ENCODE measurements at regions of chr1 and their contacts with region 1.

Region 1: DNA sequence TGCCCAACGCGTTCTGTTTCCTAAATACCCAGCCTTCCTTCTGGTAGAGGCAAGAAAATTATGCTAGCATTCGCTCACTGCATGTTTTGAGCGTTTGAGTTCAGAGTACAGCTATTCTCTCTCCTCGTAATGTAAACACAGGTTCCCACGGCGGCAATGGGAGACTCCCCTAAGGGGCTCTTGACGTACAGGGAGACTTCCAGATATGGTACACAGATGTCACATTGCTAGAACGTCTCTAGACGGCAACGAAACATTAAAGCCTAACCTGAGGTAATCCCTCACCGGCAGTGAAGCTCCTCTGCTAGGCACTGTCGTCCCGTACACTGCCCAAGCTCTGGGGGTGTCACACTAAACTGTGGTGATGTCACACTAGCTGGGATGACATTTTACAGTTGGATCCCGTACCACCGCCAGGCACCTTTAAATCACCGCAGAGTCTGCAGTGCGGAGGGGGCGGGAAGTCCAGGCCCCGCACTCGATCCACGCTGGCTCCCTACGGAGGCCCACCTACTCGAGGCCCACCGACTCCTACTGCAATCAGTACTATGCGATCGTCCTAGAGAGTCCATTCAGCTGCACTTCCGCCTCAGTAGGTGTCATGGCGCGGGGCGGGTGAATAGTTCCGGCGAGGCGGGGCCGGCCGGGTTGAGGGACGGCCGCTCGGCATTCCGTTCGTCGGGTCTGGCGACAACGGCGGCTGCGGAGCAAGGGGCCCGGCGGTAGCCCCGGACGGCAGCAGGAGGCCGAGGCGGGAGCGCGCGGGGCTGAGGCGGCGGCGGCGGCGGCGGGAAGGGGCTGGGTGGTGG is at the start of gene HIPK1:
- DNase-seq: peak; percentile 88 to 97 (median 93)
- ATAC-seq: peak; percentile 69
- H3K4me3 ChIP-seq: peak within 1 kb of the TSS; percentile 100
- H3K4me3 Mint-ChIP-seq: peak within 1 kb of the TSS; percentile 96 to 100 (median 99)
- H3K27ac ChIP-seq: peak within 1 kb of the TSS; percentile 99
- H3K27ac Mint-ChIP-seq: peak within 1 kb of the TSS; percentile 93 to 100 (median 100)
- H3K4me1 ChIP-seq: peaks cover 41 to 46% of the 10 kb centered on the region in 2 donors
- H3K4me1 Mint-ChIP-seq: peaks cover 41 to 56% (median 48%) of the 10 kb centered on the region in 7 donors
- H3K27me3 ChIP-seq: no peaks in the 10 kb centered on the region
- H3K27me3 Mint-ChIP-seq: peaks cover 0 to 12% (median 0%) of the 10 kb centered on the region in 5 donors
- total RNA-seq, gene HIPK1: 95.8 to 211 (median 124) TPM

Region 2: GRCh38 chr1:112619520-112620376 is 1309.4 kb before region 1 on chr1 and contains the start of gene CAPZA1:
- CTCF ChIA-PET with region 1: no interaction called
- POLR2A ChIA-PET with region 1: interaction called, 6 read pairs
- intact Hi-C with region 1: loop called (anchors 1 to 2 kb)
- DNase-seq: peak; percentile 83 to 93 (median 91)
- ATAC-seq: peak; percentile 89
- H3K4me3 ChIP-seq: peak within 1 kb of the TSS; percentile 93
- H3K4me3 Mint-ChIP-seq: peak within 1 kb of the TSS; percentile 98 to 100 (median 99)
- H3K27ac ChIP-seq: peak within 1 kb of the TSS; percentile 100
- H3K27ac Mint-ChIP-seq: peak within 1 kb of the TSS; percentile 99 to 100 (median 100)
- H3K4me1 ChIP-seq: peaks cover 19 to 21% of the 10 kb centered on the region in 2 donors
- H3K4me1 Mint-ChIP-seq: peaks cover 27 to 55% (median 46%) of the 10 kb centered on the region in 7 donors
- H3K27me3 ChIP-seq: no peaks in the 10 kb centered on the region
- H3K27me3 Mint-ChIP-seq: peaks cover 0 to 1% (median 0%) of the 10 kb centered on the region in 5 donors
- total RNA-seq, gene CAPZA1: 114 to 237 (median 143) TPM

Region 3: GRCh38 chr1:113811888-113812660 is 117.1 kb before region 1 on chr1 and contains the start of gene RSBN1:
- CTCF ChIA-PET with region 1: interaction called, 3 read pairs
- POLR2A ChIA-PET with region 1: interaction called, 8 read pairs
- intact Hi-C with region 1: loop called (anchors 1 kb)
- DNase-seq: peak; percentile 92 to 99 (median 98)
- ATAC-seq: peak; percentile 95
- H3K4me3 ChIP-seq: peak within 1 kb of the TSS; percentile 88
- H3K4me3 Mint-ChIP-seq: peak within 1 kb of the TSS; percentile 91 to 99 (median 97)
- H3K27ac ChIP-seq: peak within 1 kb of the TSS; percentile 97
- H3K27ac Mint-ChIP-seq: peak within 1 kb of the TSS; percentile 96 to 99 (median 98)
- H3K4me1 ChIP-seq: peaks cover 17 to 25% of the 10 kb centered on the region in 2 donors
- H3K4me1 Mint-ChIP-seq: peaks cover 20 to 51% (median 38%) of the 10 kb centered on the region in 7 donors
- H3K27me3 ChIP-seq: no peaks in the 10 kb centered on the region
- H3K27me3 Mint-ChIP-seq: no peaks in the 10 kb centered on the region
- total RNA-seq, gene RSBN1: 29.9 to 58.1 (median 42.0) TPM

Region 4: GRCh38 chr1:113904674-113905434 is 24.3 kb before region 1 on chr1 and contains the starts of genes AP4B1 and DCLRE1B:
- CTCF ChIA-PET with region 1: interaction called, 39 read pairs
- POLR2A ChIA-PET with region 1: interaction called, 201 read pairs
- intact Hi-C with region 1: loop called (anchors 1 kb)
- DNase-seq: peak; percentile 88 to 98 (median 97)
- ATAC-seq: peak; percentile 96
- H3K4me3 ChIP-seq: peak within 1 kb of the TSS; percentile 82
- H3K4me3 Mint-ChIP-seq: peak within 1 kb of the TSS; percentile 92 to 100 (median 99)
- H3K27ac ChIP-seq: peak within 1 kb of the TSS; percentile 89
- H3K27ac Mint-ChIP-seq: peak within 1 kb of the TSS; percentile 96 to 100 (median 99)
- H3K4me1 ChIP-seq: peaks cover 15 to 21% of the 10 kb centered on the region in 2 donors
- H3K4me1 Mint-ChIP-seq: peaks cover 36 to 62% (median 54%) of the 10 kb centered on the region in 7 donors
- H3K27me3 ChIP-seq: no peaks in the 10 kb centered on the region
- H3K27me3 Mint-ChIP-seq: peaks cover 0 to 4% (median 0%) of the 10 kb centered on the region in 5 donors
- total RNA-seq, gene AP4B1: 50.8 to 75.4 (median 65.0) TPM
- total RNA-seq, gene DCLRE1B: 4.1 to 13.6 (median 6.9) TPM

Region 5: GRCh38 chr1:113963281-113963906 is 34.2 kb after region 1 on chr1:
- CTCF ChIA-PET with region 1: interaction called, 14 read pairs
- POLR2A ChIA-PET with region 1: interaction called, 22 read pairs
- intact Hi-C with region 1: loop called (anchors 1 to 2 kb)
- DNase-seq: peak in 3 of 9 donors; percentile 25 to 46 (median 39)
- ATAC-seq: peak; percentile 68
- H3K4me3 ChIP-seq: no peak overlapping the region
- H3K4me3 Mint-ChIP-seq: no peak overlapping the region
- H3K27ac ChIP-seq: no peak overlapping the region
- H3K27ac Mint-ChIP-seq: peak overlapping the region in 8 of 9 donors; percentile 22 to 87 (median 76)
- H3K4me1 ChIP-seq: no peaks in the 10 kb centered on the region
- H3K4me1 Mint-ChIP-seq: peaks cover 4 to 35% (median 20%) of the 10 kb centered on the region in 7 donors
- H3K27me3 ChIP-seq: no peaks in the 10 kb centered on the region
- H3K27me3 Mint-ChIP-seq: no peaks in the 10 kb centered on the region

Region 6: DNA sequence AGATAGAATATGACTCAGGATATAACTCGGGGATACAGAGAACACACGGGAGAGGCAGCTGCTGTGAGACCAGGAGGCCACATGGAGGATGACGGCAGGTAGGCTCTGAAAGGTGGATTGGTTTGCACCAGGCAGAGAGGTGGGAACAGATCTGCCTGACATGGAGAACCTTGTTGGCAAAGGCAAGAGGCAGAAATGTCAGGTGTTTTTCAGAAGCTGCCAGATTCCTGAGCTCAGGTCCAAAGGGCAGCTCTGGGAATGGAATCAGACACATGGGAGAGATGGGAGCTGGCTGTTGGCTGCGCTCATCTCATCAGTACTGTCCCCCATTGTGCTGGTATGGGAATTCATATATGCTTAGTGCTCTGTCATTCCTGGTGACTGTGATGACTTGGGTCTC is 205.4 kb after region 1 on chr1:
- CTCF ChIA-PET with region 1: no interaction called
- POLR2A ChIA-PET with region 1: no interaction called
- intact Hi-C with region 1: no loop called
- DNase-seq: no peak
- ATAC-seq: no peak
- H3K4me3 ChIP-seq: no peak overlapping the region
- H3K4me3 Mint-ChIP-seq: no peak overlapping the region
- H3K27ac ChIP-seq: no peak overlapping the region
- H3K27ac Mint-ChIP-seq: no peak overlapping the region
- H3K4me1 ChIP-seq: no peaks in the 10 kb centered on the region
- H3K4me1 Mint-ChIP-seq: peaks cover 0 to 12% (median 8%) of the 10 kb centered on the region in 7 donors
- H3K27me3 ChIP-seq: no peaks in the 10 kb centered on the region
- H3K27me3 Mint-ChIP-seq: peaks cover 8 to 18% (median 11%) of the 10 kb centered on the region in 5 donors

Region 7: GRCh38 chr1:114581335-114582287 is 652.5 kb after region 1 on chr1 and contains the start of gene BCAS2:
- CTCF ChIA-PET with region 1: no interaction called
- POLR2A ChIA-PET with region 1: no interaction called
- intact Hi-C with region 1: loop called (anchors 1 to 5 kb)
- DNase-seq: peak; percentile 71 to 98 (median 97)
- ATAC-seq: peak; percentile 97
- H3K4me3 ChIP-seq: peak within 1 kb of the TSS; percentile 76
- H3K4me3 Mint-ChIP-seq: peak within 1 kb of the TSS; percentile 92 to 99 (median 98)
- H3K27ac ChIP-seq: peak within 1 kb of the TSS; percentile 93
- H3K27ac Mint-ChIP-seq: peak within 1 kb of the TSS; percentile 95 to 99 (median 98)
- H3K4me1 ChIP-seq: peaks cover 21 to 23% of the 10 kb centered on the region in 2 donors
- H3K4me1 Mint-ChIP-seq: peaks cover 14 to 55% (median 41%) of the 10 kb centered on the region in 7 donors
- H3K27me3 ChIP-seq: peaks cover 0 to 3% of the 10 kb centered on the region in 2 donors
- H3K27me3 Mint-ChIP-seq: peaks cover 0 to 4% (median 4%) of the 10 kb centered on the region in 5 donors
- total RNA-seq, gene BCAS2: 32.3 to 87.1 (median 46.0) TPM